PC-3 (cell line): ENCODE measurements at regions of chr12 and their contacts with region 1.

Region 1: DNA sequence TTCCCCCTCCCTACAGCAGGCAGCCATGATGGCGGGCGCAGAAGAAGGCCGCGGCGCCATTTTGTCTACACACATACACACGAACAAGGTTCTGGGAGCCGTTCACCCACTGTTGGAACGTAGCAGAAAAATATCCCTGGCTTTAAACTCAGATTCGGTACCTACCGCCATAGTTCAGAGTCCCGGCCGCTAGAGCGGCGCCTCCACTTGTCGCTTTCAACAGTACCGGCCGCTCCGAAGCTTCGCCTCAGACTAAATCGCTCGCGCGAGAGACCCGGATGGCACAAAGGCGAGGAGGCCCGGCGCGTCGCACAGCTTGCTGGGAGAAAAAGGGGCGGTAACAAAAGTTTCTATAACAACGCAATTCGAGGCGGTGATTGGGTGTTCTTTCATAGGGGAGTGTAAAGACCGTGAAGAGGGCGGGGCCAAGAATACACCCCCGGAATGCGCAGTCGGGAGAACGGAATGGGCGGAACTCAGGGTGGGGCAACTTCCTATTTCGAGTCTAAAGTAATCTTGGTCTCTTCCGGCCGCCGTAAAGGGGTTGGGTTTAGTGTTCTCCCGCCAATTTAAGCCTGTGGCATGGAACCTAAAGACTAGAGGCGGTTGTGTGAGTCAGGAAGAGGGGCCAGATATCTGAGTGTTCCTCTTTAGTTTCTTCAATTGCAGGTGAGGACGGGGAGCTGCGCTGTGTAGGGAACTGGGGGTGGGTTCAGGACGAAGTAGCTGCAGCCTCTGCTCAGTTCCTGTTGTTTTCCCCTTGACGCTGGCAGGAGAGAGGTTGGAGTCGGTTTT is at the starts of genes KNTC1 and RSRC2:
- DNase-seq: peak; percentile 100
- ATAC-seq: peak; percentile 92
- H3K4me3 ChIP-seq: peak within 1 kb of the TSS; percentile 95
- H3K27ac ChIP-seq: peak within 1 kb of the TSS; percentile 86
- H3K4me1 ChIP-seq: peaks cover 26% of the 10 kb centered on the region
- H3K27me3 ChIP-seq: no peaks in the 10 kb centered on the region
- CTCF ChIP-seq: no peak
- total RNA-seq, gene KNTC1: 80.3 and 84.8 TPM in 2 replicates
- total RNA-seq, gene RSRC2: 87.3 and 105 TPM in 2 replicates

Region 2: DNA sequence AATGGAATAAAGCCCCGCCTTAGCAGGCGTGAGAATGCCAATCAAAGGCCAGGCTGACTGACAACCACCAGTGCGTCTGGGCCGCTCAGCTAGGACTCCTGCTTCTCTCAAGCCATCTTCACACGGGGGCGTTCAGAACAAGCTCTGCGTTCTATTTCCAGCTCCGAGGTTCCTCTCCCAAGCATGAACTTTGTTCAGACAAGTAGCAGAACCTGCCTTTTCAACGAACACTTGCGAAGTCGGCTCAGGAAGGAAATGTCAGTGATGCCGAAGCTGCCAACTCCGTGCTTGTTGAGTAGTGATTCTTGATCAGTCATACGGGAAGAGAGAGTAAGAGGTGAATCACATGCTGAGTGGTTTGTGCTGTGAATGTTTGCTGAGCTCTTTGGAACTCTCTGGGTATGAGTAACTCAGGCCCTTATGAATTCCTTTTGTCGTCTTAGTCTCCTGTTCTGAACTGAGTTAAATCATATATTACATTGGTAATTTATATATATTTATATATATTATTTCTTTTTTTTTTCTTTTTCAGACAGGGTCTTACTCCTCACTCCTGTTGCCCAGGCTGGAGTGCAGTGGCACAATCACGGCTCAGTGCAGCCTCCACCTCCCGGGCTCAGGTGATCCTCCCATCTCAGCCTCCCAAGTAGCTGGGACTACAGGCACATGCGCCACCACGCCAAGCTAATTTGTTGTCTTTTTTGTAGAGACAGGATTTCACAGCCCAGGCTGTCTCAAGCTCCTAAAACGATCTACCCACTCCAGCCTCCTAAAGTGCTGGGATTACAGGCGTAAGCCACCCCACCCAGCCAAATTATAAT is 534.6 kb before region 1 on chr12:
- CTCF ChIA-PET with region 1: no interaction called
- POLR2A ChIA-PET with region 1: no interaction called
- intact Hi-C with region 1: loop called (anchors 10 kb)
- DNase-seq: peak; percentile 99
- ATAC-seq: peak; percentile 90
- H3K4me3 ChIP-seq: peak overlapping the region; percentile 37
- H3K27ac ChIP-seq: peak overlapping the region; percentile 96
- H3K4me1 ChIP-seq: peaks cover 33% of the 10 kb centered on the region
- H3K27me3 ChIP-seq: no peaks in the 10 kb centered on the region
- CTCF ChIP-seq: 0 out of 2 replicates have a peak, but pooled peaks have one; percentile 10

Region 3: DNA sequence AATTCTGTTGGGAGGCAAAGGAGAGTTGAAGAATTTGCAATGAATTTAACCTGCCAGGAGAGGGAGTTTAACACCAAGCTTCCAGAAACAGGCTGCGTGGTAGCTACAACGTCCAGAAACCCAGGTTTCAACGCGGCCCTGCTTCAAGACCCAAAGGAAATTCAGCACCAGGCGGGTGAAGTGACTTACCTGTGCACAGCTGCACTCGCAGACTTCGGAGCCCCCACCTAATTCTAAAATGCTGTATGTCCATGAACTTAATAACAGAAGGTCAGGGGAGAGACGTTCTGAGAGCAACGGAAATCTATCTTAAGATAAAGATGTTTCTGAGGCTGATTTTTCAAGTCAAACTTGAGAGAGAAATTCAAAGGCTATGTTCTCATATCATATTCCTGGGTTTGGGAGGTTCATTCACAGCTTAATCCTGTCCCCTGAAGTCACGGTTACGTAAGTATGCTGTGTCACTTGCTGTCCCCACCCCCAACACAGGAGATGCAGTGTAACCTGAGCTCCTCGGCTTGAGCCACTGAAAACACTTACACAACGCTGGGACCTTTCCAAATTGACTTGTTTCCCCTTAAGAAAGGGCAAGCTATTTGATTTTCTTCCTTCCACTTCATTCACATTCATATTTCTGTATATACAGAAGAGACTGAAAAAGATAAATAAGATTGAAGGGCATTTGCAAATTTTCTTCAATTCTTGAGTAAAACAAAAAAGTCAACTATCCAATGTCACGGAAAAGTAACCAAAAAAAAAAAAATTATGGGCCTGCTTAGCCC is 127.1 kb before region 1 on chr12:
- CTCF ChIA-PET with region 1: no interaction called
- POLR2A ChIA-PET with region 1: interaction called, 5 read pairs
- intact Hi-C with region 1: loop called (anchors 1 kb)
- DNase-seq: peak; percentile 96
- ATAC-seq: peak; percentile 85
- H3K4me3 ChIP-seq: peak overlapping the region; percentile 62
- H3K27ac ChIP-seq: peak overlapping the region; percentile 95
- H3K4me1 ChIP-seq: peaks cover 26% of the 10 kb centered on the region
- H3K27me3 ChIP-seq: no peaks in the 10 kb centered on the region
- CTCF ChIP-seq: peak; percentile 94

Region 4: DNA sequence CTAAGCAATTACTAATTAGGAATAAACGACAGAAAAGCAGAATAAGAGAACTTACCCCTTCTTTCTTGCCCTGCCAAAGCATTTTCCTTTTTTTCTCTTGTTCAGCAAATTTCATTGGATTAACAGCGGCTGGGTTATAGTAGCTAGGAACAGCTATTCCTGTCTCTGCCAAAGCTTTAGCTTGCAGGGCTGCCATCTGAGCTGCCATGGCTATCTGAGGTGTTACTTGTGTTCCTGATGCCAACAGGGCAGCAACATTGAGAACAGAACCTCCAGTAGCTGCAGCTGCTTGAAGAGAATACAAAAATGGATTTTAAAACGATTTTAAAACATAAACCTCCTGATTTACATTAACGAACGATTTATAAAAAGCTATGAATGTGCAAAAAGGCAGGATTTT is 18.7 kb before region 1 on chr12:
- CTCF ChIA-PET with region 1: no interaction called
- POLR2A ChIA-PET with region 1: no interaction called
- intact Hi-C with region 1: no loop called
- DNase-seq: no peak
- ATAC-seq: no peak
- H3K4me3 ChIP-seq: no peak overlapping the region
- H3K27ac ChIP-seq: no peak overlapping the region
- H3K4me1 ChIP-seq: no peaks in the 10 kb centered on the region
- H3K27me3 ChIP-seq: no peaks in the 10 kb centered on the region
- CTCF ChIP-seq: no peak

Region 5: DNA sequence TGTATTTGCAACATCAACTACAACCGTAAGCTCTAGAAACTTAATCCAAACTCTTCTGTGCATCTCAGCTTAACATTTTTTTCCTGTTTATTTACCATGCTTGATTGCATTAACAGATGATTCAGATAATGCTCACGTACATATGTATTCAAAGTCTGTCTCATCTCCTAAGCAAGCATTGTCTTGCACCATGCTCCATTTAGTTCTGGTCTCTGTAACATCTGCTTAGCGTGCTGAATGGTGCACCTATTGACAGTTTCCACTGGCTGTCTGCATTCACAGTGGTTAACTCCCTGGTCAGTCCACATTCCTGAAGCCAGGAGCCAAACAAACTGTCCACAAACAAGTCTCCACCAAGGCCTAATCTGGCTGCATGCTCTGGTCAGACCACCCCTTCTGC is 84.0 kb after region 1 on chr12:
- CTCF ChIA-PET with region 1: no interaction called
- POLR2A ChIA-PET with region 1: no interaction called
- intact Hi-C with region 1: loop called (anchors 2 kb)
- DNase-seq: peak; percentile 96
- ATAC-seq: peak; percentile 99
- H3K4me3 ChIP-seq: peak overlapping the region; percentile 30
- H3K27ac ChIP-seq: peak overlapping the region; percentile 89
- H3K4me1 ChIP-seq: peaks cover 26% of the 10 kb centered on the region
- H3K27me3 ChIP-seq: no peaks in the 10 kb centered on the region
- CTCF ChIP-seq: no peak